Activated CD4-positive, alpha-beta T cell treated with anti-CD3 and anti-CD28 coated beads for 36 hours (primary cell): ENCODE measurements at regions of chr2 and their contacts with region 1.

Region 1: GRCh38 chr2:111091811-111092211 is 28.9 kb upstream of the BCL2L11 start:
- DNase-seq: peak; percentile 42
- ATAC-seq: peak; percentile 98
- H3K4me3 Mint-ChIP-seq: no peak overlapping the region
- H3K27ac Mint-ChIP-seq: no peak overlapping the region
- H3K4me1 Mint-ChIP-seq: peaks cover 16% of the 10 kb centered on the region
- H3K27me3 Mint-ChIP-seq: peaks cover 50% of the 10 kb centered on the region

Region 2: DNA sequence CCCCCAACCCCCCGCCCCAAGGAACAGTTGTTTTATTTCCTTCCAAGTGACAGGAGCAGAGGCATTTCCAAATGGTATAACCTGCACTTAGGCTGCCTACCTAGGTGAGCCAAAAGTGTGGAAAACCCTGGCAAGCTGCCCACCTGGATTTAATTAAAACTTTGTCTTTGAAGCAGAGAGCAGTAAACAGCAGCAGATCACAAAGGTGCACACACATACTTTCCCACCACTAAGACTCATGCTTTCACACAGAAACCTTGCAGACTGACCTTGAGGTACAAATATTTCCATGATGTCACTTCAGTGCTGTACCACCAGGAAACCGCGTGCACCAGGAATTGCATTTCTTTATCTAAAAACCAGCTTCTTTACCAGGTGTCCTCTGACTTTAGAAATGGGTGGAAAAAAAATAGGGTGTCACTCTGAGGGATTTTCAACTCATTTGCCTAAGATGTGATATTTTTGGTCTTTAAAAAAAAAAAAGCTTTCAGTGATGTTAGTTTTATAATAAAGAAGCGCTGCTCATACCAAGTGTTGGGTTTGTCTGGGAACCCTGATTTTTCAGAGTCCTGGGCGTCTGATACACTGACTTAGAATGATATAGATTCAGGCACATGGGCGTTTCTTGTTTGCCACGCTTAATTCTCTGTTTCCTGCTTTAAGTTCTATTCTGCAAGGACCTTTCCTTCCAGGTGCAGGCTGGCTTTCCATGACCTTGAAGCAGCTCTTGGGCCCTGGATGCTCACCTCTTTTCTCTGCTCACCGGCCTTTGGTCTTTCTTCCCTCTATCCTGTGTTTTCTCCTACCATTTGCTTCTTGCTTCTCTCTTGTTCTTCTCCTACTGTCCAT is 41.8 kb before region 1 on chr2:
- CTCF ChIA-PET with region 1: no interaction called
- POLR2A ChIA-PET with region 1: no interaction called
- intact Hi-C with region 1: loop called (anchors 2 kb)
- DNase-seq: peak; percentile 53
- ATAC-seq: peak; percentile 71
- H3K4me3 Mint-ChIP-seq: no peak overlapping the region
- H3K27ac Mint-ChIP-seq: no peak overlapping the region
- H3K4me1 Mint-ChIP-seq: peaks cover 42% of the 10 kb centered on the region
- H3K27me3 Mint-ChIP-seq: peaks cover 52% of the 10 kb centered on the region

Region 3: DNA sequence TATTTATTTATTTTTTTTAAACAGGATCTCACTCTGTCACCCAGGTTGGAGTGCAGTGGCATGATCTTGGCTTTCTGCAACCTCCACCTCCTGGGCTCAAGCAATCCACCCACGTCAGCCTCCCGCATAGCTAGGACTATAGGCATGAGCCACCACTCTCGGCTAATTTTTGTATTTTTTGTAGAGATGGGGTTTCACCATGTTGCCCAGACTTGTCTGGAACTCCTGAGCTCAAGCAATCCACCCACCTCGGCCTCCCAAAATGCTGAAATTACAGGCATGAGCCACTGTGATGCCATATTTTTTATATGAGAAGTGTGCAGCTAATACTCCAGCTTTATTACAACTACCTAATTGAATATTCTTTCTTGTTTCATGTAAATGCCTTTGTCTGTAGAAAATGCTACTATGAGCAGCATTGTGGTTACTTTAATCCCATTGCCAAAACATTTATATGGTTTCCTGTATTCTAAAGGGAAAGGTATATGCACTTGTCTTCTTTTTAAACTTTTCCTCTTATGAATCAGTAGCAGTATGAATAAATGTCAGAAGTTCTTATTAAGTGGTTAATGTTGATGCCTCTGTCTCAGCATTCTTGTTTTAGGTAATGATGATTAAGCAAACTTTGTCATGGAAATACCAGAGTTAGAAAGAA is 19.4 kb after region 1 on chr2:
- CTCF ChIA-PET with region 1: interaction called, 3 read pairs
- POLR2A ChIA-PET with region 1: no interaction called
- intact Hi-C with region 1: loop called (anchors 1 kb)
- DNase-seq: peak; percentile 34
- ATAC-seq: peak; percentile 25
- H3K4me3 Mint-ChIP-seq: no peak overlapping the region
- H3K27ac Mint-ChIP-seq: no peak overlapping the region
- H3K4me1 Mint-ChIP-seq: peaks cover 19% of the 10 kb centered on the region
- H3K27me3 Mint-ChIP-seq: peaks cover 51% of the 10 kb centered on the region